Cardiac septum (tissue), 1 donor: ENCODE measurements at regions of chr3 and their contacts with region 1.

Region 1: DNA sequence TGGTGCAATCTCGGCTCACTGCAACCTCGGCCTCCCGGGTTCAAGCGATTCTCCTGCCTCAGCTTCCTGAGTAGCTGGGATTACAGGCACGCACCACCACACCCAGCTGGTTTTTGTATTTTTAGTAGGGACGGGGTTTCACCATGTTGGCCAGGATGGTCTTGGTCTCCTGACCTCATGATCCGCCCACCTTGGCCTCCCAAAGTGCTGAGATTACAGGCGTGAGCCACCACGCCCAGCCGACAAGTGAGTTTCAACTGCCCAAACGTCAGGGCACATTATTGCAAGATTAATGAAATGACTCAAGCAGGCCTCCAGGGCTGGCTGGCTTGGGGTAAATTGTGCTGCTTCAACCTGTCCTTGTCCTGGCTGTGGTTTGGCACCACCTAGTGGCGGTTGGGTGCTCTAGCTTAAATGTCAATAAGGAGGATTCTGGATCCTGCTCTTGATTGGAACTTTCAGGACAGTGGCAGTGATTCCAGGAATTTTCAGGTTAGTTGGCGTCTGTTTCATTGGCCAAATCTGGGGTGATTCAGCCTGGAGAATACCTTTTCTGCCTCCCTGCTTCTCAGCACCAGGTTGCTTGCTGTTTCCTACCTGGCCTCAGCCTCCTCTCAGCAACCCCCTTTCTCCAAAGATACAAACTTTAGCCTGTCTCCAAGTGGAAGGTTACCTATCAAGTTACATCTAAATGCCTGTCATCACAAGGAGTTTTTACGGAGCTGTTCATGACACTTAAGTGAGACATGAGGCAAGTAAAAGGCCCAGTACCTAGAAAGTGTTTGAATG is 32.4 kb upstream of the SACM1L start:
- DNase-seq: peak; percentile 94

Region 2: GRCh38 chr3:45037734-45038455 is 618.9 kb before region 1 on chr3:
- intact Hi-C with region 1: loop called (anchors 10 kb)
- DNase-seq: peak; percentile 94

Region 3: DNA sequence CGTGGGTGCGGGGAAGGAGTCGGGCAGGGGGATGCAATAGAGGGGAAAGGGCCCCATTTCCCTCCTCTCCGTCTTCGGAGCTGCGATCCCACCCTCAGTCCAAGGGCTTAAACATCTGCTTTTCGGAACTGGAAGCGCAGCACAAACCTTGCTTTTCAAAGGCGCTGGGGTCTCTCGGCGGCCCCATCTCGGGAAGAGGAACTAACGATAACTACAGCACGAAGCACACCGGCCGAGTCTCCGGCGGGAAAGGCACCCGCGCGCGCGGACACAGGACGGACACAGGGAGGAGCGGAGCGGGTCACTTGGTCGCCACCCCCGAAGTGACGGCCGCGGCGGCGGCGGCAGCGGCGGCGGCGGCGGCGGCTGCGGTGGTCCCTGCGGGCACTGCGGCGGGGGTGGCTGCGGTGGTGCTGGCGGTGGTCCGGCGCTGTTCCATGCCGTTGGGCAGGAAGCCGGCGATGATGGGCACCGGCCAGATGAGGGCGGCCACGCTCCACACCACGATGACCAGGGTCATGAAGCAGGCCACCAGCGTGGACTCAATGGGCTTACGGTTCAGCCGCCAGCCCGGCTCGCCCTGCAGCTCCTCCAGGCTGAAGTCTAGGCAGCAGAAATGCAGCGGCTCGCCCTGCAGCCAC is 431.8 kb before region 1 on chr3:
- intact Hi-C with region 1: loop called (anchors 10 kb)
- DNase-seq: peak; percentile 86

Region 4: DNA sequence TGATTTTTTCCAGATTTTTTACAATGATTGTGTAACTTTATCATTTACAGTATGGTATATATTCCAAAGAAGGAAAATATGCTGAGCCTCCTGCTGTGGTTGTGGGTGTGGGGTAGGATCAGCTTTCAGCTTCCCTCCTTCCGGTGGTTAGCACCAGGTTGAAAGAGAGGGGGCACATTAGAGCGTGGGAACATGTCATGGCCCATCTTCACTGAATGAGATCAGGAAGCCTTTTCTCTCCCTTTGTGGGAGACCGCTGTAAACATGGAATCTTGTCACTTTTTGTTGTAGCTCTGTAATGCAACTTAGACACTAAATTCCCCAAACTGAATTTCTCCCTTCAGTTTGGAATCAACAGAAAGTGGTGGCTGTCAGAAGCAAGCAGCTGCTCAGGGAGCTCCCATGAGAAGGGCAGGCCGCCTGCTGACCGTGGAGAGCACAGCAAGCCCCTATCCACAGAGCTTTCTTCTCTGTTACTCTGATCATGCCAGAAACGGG is 148.9 kb before region 1 on chr3:
- intact Hi-C with region 1: loop called (anchors 1 kb)
- DNase-seq: no peak

Region 5: GRCh38 chr3:45553996-45554666 is 102.6 kb before region 1 on chr3:
- intact Hi-C with region 1: loop called (anchors 5 kb)
- DNase-seq: peak; percentile 81

Region 6: GRCh38 chr3:45593708-45594609 is 62.8 kb before region 1 on chr3:
- intact Hi-C with region 1: loop called (anchors 1 kb)
- DNase-seq: peak; percentile 88